ENCODE measurements at regions of chr9 and their contacts with region 1.

Region 1: GRCh38 chr9:126326228-126327005 is at the start of gene MVB12B:
- DNase-seq: peak; percentile 39 to 76 (median 60)
- ATAC-seq: peak; percentile 69 to 73
- H3K4me3 Mint-ChIP-seq: peak within 1 kb of the TSS; percentile 81 to 92 (median 88)
- H3K27ac Mint-ChIP-seq: peak within 1 kb of the TSS; percentile 90 to 97 (median 96)
- H3K4me1 Mint-ChIP-seq: peaks cover 29 to 51% (median 44%) of the 10 kb centered on the region in 4 donors
- H3K27me3 Mint-ChIP-seq: no peaks in the 10 kb centered on the region
- polyA plus RNA-seq, gene MVB12B: 7.2 to 12.5 (median 8.0) TPM

Region 2: DNA sequence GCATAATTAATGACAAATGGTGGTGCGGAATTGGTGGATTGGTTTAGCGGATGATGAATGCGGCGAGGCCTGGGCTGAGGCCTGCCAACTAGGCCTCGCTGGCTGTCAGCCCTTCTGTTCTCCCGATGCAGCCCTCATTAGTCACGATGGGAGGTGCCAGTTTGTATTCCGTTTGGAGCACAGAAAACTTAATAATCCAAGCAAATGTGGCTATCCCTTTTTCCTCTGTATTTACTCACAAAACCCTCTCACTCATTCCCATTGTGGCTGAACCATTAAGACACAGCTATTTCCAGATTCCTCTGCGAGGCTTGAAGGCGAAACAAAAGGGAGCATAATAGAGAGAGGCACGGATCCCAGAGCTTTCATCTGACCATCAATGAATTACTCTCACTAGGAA is 114.5 kb after region 1 on chr9:
- POLR2A ChIA-PET with region 1: no interaction called
- DNase-seq: no peak
- ATAC-seq: no peak
- H3K4me3 Mint-ChIP-seq: no peak overlapping the region
- H3K27ac Mint-ChIP-seq: peak overlapping the region in 2 of 10 donors; percentile 21 to 37
- H3K4me1 Mint-ChIP-seq: peaks cover 9 to 38% (median 23%) of the 10 kb centered on the region in 4 donors
- H3K27me3 Mint-ChIP-seq: no peaks in the 10 kb centered on the region

Region 3: DNA sequence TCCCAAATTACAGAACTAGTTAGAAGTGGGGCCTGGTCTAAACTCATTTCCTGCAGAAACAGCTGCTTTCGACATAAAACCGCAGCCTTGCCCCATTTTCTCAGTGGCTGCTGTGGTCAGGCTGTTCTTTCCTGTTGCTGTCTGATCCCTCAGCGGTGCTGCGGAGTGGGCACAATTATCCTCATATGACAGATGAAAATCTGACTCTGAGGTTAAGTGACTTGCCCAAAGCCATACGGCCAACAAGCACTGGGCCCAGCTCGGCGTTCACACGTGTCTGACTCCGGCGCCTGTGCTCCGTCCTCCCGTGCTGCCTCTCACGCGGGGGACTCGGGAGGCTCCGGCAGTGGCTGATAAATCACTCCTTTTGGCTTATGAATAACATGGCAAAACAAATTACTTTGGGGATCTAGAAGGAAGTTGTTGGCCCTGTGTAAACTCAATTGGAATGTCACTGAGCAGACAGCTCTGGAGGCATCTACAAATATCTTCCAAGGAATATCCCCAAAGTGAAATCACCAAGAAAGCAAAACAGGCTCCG is 144.7 kb after region 1 on chr9:
- POLR2A ChIA-PET with region 1: interaction called, 25 read pairs
- DNase-seq: peak; percentile 20 to 82 (median 72)
- ATAC-seq: peak; percentile 75 to 76
- H3K4me3 Mint-ChIP-seq: peak overlapping the region; percentile 66 to 86 (median 80)
- H3K27ac Mint-ChIP-seq: peak overlapping the region; percentile 87 to 96 (median 95)
- H3K4me1 Mint-ChIP-seq: peaks cover 59 to 93% (median 90%) of the 10 kb centered on the region in 4 donors
- H3K27me3 Mint-ChIP-seq: no peaks in the 10 kb centered on the region